Activated B cell treated with CpG ODN at 0.5 μM for 24 hours (primary cell): ENCODE measurements at regions of chr7 and their contacts with region 1.

Region 1: DNA sequence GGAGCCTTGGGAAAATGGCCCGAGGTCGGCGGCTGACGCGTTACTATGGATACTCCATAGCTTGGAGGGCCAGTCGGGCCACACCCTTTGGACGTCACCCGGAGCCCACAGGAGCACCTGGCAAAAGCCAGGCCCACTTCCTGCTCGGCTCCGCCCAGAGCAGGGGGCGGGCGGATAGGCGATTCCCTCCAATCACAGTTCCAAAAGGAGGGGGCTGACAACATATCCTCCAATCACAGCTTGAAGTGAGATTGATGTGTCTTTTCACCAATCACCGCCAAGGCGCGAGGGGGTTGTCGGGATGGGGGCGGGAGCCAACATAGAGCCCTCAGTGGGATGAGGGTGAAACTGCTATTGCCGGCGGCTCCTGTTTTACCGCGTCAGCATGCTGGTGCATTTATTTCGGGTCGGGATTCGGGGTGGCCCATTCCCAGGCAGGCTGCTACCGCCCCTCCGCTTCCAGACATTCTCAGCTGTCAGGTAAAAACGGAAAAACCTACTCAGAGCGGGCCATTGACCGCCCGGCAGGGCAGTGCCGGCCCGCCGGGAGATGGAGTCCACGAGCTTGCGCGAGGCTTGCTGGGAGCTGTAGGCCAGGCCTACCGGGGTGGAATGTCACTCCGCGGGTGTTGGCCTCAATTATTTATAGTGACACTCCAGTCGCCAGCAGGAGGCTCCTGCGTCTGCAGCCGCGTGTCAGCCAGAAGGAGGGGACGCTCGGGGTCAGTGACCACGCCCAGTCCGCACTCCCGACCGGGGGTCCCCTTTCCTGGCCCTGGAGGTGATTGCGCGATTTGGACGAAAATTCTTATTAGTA is at the start of gene ABCB8:
- DNase-seq: peak; percentile 94
- ATAC-seq: peak; percentile 93
- H3K4me3 Mint-ChIP-seq: peak within 1 kb of the TSS; percentile 96
- H3K27ac Mint-ChIP-seq: peak within 1 kb of the TSS; percentile 97
- H3K4me1 Mint-ChIP-seq: peaks cover 22% of the 10 kb centered on the region
- H3K27me3 Mint-ChIP-seq: peaks cover 9% of the 10 kb centered on the region
- CTCF ChIP-seq: no peak
- total RNA-seq, gene ABCB8: 38.9 and 46.5 TPM in 2 replicates

Region 2: DNA sequence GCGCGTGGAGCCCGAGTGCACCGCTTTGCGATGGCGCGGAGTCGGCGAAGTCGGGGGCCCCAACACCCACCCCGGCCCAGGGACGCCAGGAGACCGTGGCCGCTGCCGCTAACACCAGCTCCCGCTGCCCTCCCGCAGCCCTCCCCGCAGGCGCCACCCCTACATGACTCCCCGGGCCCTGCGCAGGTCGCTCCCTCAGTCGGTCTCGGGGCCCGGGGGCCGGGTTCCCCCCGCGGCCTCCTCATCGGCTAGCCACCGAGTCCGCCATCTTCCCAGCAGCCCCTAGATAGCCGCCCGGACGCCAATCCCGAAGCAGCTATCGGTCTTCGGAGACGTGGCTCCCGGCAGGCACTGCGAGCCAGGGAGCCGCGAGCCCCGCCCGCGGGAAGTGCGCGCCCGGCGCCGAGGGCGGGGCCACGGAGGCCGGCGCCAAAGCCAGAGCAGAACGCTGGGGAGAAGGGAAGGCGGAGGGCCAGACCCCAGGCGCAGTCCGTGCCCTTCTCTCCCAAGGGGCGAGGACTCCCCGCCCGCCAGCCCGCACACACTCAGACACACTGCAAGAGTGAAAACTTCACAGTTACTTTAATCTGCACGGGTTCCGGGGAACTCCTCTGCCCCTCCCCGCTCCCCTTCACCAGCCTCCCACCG is 52.3 kb after region 1 on chr7 and contains the start of gene FASTK:
- CTCF ChIA-PET with region 1: no interaction called
- POLR2A ChIA-PET with region 1: interaction called, 13 read pairs
- intact Hi-C with region 1: loop called (anchors 1 kb)
- DNase-seq: peak; percentile 81
- ATAC-seq: peak; percentile 83
- H3K4me3 Mint-ChIP-seq: peak within 1 kb of the TSS; percentile 91
- H3K27ac Mint-ChIP-seq: peak within 1 kb of the TSS; percentile 70
- H3K4me1 Mint-ChIP-seq: peaks cover 49% of the 10 kb centered on the region
- H3K27me3 Mint-ChIP-seq: peaks cover 8% of the 10 kb centered on the region
- CTCF ChIP-seq: no peak
- total RNA-seq, gene FASTK: 97.6 and 103 TPM in 2 replicates

Region 3: GRCh38 chr7:151226875-151227782 is 198.8 kb after region 1 on chr7 and contains the start of gene ABCF2:
- CTCF ChIA-PET with region 1: no interaction called
- POLR2A ChIA-PET with region 1: interaction called, 3 read pairs
- intact Hi-C with region 1: loop called (anchors 1 kb)
- DNase-seq: peak; percentile 97
- ATAC-seq: peak; percentile 99
- H3K4me3 Mint-ChIP-seq: peak within 1 kb of the TSS; percentile 99
- H3K27ac Mint-ChIP-seq: peak within 1 kb of the TSS; percentile 91
- H3K4me1 Mint-ChIP-seq: peaks cover 41% of the 10 kb centered on the region
- H3K27me3 Mint-ChIP-seq: no peaks in the 10 kb centered on the region
- CTCF ChIP-seq: no peak
- total RNA-seq, gene ABCF2: 47.3 and 52.4 TPM in 2 replicates

Region 4: GRCh38 chr7:151341357-151342101 is 313.2 kb after region 1 on chr7 and contains the start of gene NUB1:
- CTCF ChIA-PET with region 1: no interaction called
- POLR2A ChIA-PET with region 1: interaction called, 3 read pairs
- intact Hi-C with region 1: loop called (anchors 2 kb)
- DNase-seq: peak; percentile 99
- ATAC-seq: peak; percentile 90
- H3K4me3 Mint-ChIP-seq: peak within 1 kb of the TSS; percentile 86
- H3K27ac Mint-ChIP-seq: peak within 1 kb of the TSS; percentile 93
- H3K4me1 Mint-ChIP-seq: peaks cover 52% of the 10 kb centered on the region
- H3K27me3 Mint-ChIP-seq: no peaks in the 10 kb centered on the region
- CTCF ChIP-seq: no peak
- total RNA-seq, gene NUB1: 47.5 and 52.7 TPM in 2 replicates